Activated CD4-positive, alpha-beta memory T cell treated with anti-CD3 and anti-CD28 coated beads for 36 hours (primary cell): ENCODE measurements at regions of chrX and their contacts with region 1.

Region 1: GRCh38 chrX:41333744-41334259 is at the start of gene DDX3X:
- DNase-seq: peak; percentile 89
- H3K4me3 Mint-ChIP-seq: peak within 1 kb of the TSS; percentile 93
- H3K27ac Mint-ChIP-seq: peak within 1 kb of the TSS; percentile 100
- H3K4me1 Mint-ChIP-seq: peaks cover 17% of the 10 kb centered on the region
- H3K27me3 Mint-ChIP-seq: peaks cover 1% of the 10 kb centered on the region
- total RNA-seq, gene DDX3X: 216 to 218 TPM

Region 2: DNA sequence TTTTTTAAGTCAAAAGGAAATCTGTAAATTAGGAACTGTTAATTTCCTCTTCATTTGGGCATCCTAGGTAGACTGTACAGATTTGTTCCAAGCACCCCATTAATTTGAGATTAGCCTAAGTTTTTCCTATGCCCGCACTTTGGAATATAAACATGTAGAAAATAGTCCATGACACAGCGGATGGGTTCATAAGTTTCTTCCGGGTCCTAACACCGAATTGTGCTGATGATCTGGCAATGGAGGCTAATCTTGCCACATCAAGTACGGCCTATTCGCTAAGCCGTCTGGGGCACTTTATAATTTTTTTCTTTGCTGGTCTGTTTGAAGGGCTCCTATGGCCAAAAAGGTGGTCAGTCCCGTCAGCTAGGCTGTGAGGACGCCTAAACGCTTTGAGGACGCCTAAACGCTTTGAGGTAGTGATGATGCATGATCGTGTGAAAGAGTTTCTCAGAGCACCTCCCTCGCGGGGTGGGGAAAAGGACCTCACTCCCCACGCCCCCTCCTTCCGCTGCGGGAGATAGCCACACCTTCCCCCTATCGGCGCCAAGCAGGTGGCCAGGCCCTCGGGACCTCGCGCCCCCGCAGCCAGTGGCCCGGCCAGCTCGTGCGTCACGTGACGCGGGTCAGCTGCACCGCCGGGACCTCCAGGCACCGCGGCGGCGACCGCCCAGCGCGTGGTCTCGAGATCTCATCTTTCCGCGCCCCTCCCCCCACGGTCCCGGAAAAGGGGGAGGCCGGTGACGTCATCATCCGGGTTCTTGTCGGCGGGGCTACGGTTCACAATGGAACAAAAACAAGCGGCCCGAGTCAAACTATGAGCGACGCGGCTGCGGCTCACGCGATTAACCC is 249.5 kb before region 1 on chrX:
- CTCF ChIA-PET with region 1: no interaction called
- POLR2A ChIA-PET with region 1: interaction called, 4 read pairs
- intact Hi-C with region 1: loop called (anchors 2 kb)
- DNase-seq: peak; percentile 96
- H3K4me3 Mint-ChIP-seq: peak overlapping the region; percentile 80
- H3K27ac Mint-ChIP-seq: peak overlapping the region; percentile 100
- H3K4me1 Mint-ChIP-seq: peaks cover 14% of the 10 kb centered on the region
- H3K27me3 Mint-ChIP-seq: no peaks in the 10 kb centered on the region

Region 3: GRCh38 chrX:41209853-41210252 is 123.9 kb before region 1 on chrX:
- CTCF ChIA-PET with region 1: no interaction called
- POLR2A ChIA-PET with region 1: no interaction called
- intact Hi-C with region 1: no loop called
- DNase-seq: no peak
- H3K4me3 Mint-ChIP-seq: no peak overlapping the region
- H3K27ac Mint-ChIP-seq: no peak overlapping the region
- H3K4me1 Mint-ChIP-seq: no peaks in the 10 kb centered on the region
- H3K27me3 Mint-ChIP-seq: no peaks in the 10 kb centered on the region

Region 4: DNA sequence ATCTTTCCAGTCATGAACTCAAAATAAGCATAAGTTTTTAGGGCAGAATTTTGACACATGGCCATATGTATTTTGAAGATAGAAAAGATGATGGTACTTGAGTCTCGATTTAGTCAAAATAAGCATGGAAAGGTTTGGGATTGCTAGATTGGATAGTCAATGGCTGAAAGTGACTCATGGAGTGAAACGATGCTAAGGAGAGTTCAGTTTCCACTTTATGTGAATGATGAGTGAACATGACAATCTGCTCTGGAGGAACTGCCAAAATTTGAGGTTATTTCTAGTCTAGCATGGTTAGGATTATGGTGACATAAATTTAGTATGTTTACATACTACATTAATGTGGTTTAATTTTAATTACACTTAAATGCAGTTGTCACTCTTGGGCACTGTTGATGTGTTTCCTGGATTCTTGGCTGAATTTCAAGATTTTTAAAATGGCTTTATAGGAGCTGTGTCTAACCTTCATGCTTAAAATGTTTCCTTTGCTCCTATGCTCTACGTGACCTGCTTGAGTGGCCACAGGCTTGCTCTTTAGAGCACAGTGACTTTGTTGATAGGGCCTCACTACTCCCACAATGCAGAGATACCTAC is 17.3 kb after region 1 on chrX:
- CTCF ChIA-PET with region 1: interaction called, 3 read pairs
- POLR2A ChIA-PET with region 1: interaction called, 7 read pairs
- intact Hi-C with region 1: loop called (anchors 1 kb)
- DNase-seq: no peak
- H3K4me3 Mint-ChIP-seq: peak overlapping the region; percentile 12
- H3K27ac Mint-ChIP-seq: peak overlapping the region; percentile 71
- H3K4me1 Mint-ChIP-seq: peaks cover 49% of the 10 kb centered on the region
- H3K27me3 Mint-ChIP-seq: no peaks in the 10 kb centered on the region

Region 5: DNA sequence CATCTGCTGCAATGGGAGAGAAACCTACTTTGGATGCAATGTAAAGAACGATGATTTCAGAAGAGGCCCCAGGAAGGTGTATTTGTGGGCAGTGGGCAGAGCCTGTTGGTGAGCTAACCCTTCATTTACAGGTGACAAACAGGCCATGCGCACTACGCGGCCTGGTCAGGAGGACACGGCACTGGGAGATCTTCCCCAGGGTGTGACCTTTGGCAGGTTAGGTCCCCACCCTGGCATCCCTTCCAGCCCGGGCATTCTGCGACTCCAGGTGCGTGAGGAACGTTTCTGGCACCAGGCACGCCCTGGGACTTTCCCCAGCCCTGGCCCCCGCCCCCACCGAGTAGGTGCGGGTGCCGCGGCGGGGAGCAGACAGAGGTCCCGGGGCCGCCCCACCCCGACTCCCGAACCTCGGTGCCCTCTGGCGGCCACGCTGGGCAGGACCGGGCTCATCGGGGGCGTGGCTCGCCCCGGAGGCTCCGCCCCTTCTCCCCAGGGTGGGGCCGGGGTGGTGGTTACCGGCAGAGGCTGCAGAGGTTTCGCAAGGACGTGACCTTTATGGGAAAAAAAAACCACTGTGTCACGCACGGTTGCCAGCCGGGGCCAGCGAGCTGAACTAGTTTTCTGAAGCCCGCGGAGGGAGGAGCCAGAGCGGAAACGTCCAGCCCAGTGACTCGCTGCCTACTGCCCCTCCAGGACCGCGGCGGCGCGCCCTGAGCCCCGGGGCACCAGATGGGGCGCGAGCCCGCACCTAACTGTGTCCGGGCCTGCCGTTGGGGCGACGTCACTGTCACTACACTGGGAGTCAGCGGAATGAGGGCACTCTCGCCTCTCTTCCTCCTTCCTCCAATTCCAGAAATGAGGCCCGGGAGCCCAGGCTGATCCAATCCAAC is 108.4 kb after region 1 on chrX:
- CTCF ChIA-PET with region 1: interaction called, 4 read pairs
- POLR2A ChIA-PET with region 1: interaction called, 4 read pairs
- intact Hi-C with region 1: loop called (anchors 1 kb)
- DNase-seq: peak; percentile 92
- H3K4me3 Mint-ChIP-seq: peak overlapping the region; percentile 66
- H3K27ac Mint-ChIP-seq: peak overlapping the region; percentile 77
- H3K4me1 Mint-ChIP-seq: peaks cover 16% of the 10 kb centered on the region
- H3K27me3 Mint-ChIP-seq: no peaks in the 10 kb centered on the region